CD14-positive monocyte (primary cell): ENCODE measurements at regions of chr20 and their contacts with region 1.

Region 1: DNA sequence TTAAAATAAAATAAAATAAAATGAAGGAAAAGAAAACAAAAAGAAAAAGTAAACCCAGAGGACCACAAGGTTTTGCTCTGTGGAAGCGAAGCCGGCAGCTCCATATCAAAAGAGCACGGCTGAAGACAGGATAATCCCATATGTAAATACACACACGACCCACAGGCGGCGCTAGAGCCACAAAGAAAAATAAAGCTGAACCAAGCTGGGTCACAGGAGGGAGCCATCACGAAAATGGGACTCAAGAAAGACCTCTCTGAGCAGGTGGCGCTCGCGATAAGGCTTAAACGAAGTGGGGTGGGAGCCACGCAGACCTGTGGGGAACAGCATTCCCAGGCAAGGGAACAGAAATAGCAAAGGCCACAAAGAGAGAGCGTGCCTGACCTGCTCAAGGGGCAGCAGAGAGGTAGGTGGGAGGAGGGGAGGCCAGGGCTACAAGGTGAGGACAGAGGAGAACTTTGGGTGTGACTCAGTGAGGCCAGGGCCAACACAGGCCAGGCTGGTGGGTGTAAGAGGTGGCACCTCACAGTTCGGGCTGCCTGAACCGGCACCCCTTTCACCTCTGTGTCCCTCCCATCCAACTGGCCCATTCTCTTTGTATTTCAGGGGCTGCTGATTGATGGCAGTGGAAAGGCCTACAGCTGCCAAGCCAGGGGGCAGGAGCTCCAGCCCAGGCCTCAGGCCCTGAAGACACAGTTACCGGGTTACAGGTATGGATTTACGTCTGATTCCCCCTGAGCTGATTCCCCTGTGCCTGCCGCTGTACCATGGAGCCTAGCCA is 26.0 kb downstream of the PTGIS start:
- DNase-seq: peak; percentile 46 to 56 (median 53)
- H3K4me3 ChIP-seq: no peak overlapping the region
- H3K4me3 Mint-ChIP-seq: no peak overlapping the region
- H3K27ac ChIP-seq: no peak overlapping the region
- H3K27ac Mint-ChIP-seq: peak overlapping the region in 3 of 7 donors; percentile 8 to 60 (median 8)
- H3K4me1 ChIP-seq: no peaks in the 10 kb centered on the region
- H3K4me1 Mint-ChIP-seq: no peaks in the 10 kb centered on the region
- H3K27me3 ChIP-seq: no peaks in the 10 kb centered on the region
- H3K27me3 Mint-ChIP-seq: peaks cover 6 to 11% (median 8%) of the 10 kb centered on the region in 3 donors
- CTCF ChIP-seq: peak; percentile 90

Region 2: DNA sequence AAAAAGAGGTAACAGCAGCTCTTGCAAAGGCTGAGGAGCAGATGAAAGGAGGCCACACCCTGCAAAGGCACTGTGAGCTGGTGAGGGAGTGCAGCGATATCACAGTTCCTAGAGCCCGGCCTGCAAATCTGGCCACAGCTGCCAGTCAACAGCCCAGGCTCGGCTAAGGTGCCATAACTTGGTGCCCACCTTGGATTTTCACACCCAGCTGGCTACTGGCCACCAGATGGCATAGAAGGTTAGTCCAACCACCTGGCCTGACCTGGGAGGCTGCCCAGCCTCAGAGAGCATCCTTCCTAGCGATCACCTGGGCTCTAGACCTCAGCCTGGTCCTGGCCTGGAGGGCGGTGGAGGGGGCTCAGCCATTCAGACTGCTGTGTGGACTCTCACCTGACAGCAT is 106.3 kb before region 1 on chr20:
- intact Hi-C with region 1: no loop called
- DNase-seq: no peak
- H3K4me3 ChIP-seq: no peak overlapping the region
- H3K4me3 Mint-ChIP-seq: no peak overlapping the region
- H3K27ac ChIP-seq: no peak overlapping the region
- H3K27ac Mint-ChIP-seq: no peak overlapping the region
- H3K4me1 ChIP-seq: no peaks in the 10 kb centered on the region
- H3K4me1 Mint-ChIP-seq: peaks cover 8% of the 10 kb centered on the region
- H3K27me3 ChIP-seq: no peaks in the 10 kb centered on the region
- H3K27me3 Mint-ChIP-seq: peaks cover 2 to 8% (median 6%) of the 10 kb centered on the region in 3 donors
- CTCF ChIP-seq: no peak

Region 3: DNA sequence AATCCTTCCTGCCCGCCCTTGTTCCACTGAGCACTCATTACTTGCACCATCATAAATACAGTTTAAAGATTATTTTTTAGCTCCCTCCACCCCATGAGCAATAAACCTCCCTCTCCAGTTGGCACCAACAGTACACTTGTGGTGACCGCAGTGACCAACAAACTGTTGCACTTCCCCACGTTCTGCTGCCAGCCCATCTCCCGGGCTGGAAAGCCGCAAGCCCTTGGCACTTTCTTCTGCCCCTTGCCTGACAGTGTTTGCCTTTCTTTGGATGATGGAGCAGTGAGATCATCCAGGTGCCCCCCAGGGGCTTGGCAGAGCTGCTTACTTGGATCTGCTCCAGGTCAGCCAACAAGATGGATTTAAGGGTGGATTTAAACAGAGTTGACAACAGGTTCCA is 81.0 kb before region 1 on chr20:
- intact Hi-C with region 1: no loop called
- DNase-seq: no peak
- H3K4me3 ChIP-seq: no peak overlapping the region
- H3K4me3 Mint-ChIP-seq: no peak overlapping the region
- H3K27ac ChIP-seq: no peak overlapping the region
- H3K27ac Mint-ChIP-seq: no peak overlapping the region
- H3K4me1 ChIP-seq: no peaks in the 10 kb centered on the region
- H3K4me1 Mint-ChIP-seq: no peaks in the 10 kb centered on the region
- H3K27me3 ChIP-seq: no peaks in the 10 kb centered on the region
- H3K27me3 Mint-ChIP-seq: peaks cover 0 to 18% (median 14%) of the 10 kb centered on the region in 3 donors
- CTCF ChIP-seq: no peak

Region 4: DNA sequence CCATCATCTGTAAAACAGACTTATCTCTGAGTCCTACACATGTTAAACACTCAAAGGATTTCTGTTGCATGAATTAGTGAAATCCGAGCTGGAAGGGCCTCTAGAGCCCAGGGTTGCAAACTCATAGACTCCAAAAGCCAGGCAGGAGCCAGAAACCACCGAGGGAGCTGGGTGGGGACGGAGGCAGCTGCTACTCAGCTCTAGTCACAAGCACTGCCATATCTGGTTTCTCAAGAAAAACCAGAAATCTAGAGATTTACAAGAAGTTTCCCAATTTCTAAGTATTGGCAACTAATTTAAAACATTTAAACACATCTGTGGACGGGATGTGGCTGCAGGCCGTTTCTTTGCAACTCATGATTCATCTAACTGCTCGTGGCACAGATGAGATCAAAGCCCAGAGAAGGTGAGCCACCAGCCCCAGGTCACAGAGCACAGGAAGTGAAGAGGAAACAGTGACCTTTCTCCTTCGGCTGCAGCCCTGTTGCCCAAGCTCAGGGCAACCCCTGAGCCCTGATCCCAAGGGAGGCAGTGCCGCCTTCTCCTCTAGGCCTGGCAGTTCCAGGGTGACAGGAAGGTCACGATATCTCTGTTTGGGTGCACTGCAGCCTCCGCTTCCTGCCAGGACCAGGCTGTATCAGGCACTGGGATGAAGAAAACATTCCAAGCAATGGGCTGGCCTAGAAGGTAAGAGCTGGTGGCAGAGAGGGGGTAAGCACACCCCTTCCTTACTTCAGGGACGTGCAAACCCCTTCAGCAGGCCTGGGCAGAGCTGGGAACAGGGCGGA is 52.4 kb after region 1 on chr20:
- intact Hi-C with region 1: no loop called
- DNase-seq: no peak
- H3K4me3 ChIP-seq: no peak overlapping the region
- H3K4me3 Mint-ChIP-seq: no peak overlapping the region
- H3K27ac ChIP-seq: no peak overlapping the region
- H3K27ac Mint-ChIP-seq: no peak overlapping the region
- H3K4me1 ChIP-seq: peaks cover 8 to 28% of the 10 kb centered on the region in 2 donors
- H3K4me1 Mint-ChIP-seq: peaks cover 33% of the 10 kb centered on the region
- H3K27me3 ChIP-seq: no peaks in the 10 kb centered on the region
- H3K27me3 Mint-ChIP-seq: peaks cover 7 to 14% (median 8%) of the 10 kb centered on the region in 3 donors
- CTCF ChIP-seq: no peak

Region 5: GRCh38 chr20:49846206-49846807 is 304.4 kb after region 1 on chr20:
- intact Hi-C with region 1: loop called (anchors 2 to 5 kb)
- DNase-seq: peak; percentile 34 to 67 (median 54)
- H3K4me3 ChIP-seq: no peak overlapping the region
- H3K4me3 Mint-ChIP-seq: no peak overlapping the region
- H3K27ac ChIP-seq: no peak overlapping the region
- H3K27ac Mint-ChIP-seq: no peak overlapping the region
- H3K4me1 ChIP-seq: peaks cover 3 to 7% of the 10 kb centered on the region in 2 donors
- H3K4me1 Mint-ChIP-seq: peaks cover 13% of the 10 kb centered on the region
- H3K27me3 ChIP-seq: no peaks in the 10 kb centered on the region
- H3K27me3 Mint-ChIP-seq: no peaks in the 10 kb centered on the region
- CTCF ChIP-seq: peak; percentile 80